ENCODE measurements at regions of chr13 and their contacts with region 1.

Region 1: DNA sequence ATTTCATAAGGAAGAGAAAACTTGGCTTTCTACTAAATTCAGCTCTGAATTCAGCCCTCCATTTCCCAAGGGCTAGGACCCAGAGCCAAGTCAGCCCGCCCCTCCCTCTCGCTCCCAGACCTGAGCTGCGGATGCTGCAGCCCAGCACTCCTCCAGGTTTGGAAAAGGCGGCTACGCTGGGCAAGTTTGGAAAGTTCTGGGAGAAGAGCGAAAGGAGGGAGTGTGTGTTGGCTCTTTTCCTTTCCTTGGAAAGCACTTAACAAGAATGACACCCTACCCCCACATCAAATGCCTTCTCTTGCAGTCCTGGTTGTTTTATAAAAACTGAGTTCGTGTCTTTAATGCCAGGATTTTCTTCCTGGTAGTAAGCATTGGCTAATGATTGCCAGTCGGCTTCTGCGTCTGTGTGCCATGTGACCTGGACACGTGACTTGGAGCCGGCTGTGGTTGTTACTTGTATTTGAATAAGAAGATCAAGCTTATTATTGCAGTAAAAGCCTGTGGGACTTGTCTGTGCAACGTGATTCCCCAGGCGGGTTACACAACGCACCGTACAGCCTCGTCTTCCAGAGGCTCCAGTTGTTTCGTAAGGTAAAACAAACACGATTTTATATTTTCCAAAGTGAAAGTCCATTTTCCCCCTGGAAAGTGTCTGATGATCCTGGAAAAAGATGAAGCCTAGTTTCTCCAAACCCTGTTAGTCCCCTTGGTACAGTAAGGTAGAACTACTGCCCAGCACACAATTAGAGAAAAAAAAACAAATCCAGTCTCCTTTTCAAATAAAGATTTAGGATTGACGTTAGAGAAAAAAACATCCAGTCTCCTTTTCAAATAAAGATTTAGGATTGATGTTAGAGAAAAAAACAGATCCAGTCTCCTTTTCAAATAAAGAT is 26.9 kb upstream of the UBE2L5 start:
- DNase-seq: peak; percentile 93
- ATAC-seq: peak; percentile 85
- H3K4me3 ChIP-seq: peak overlapping the region; percentile 54
- H3K27ac ChIP-seq: peak overlapping the region; percentile 91
- H3K4me1 ChIP-seq: no peaks in the 10 kb centered on the region
- H3K27me3 ChIP-seq: no peaks in the 10 kb centered on the region
- CTCF ChIP-seq: no peak
- POLR2A ChIP-seq: no peak
- RAD21 ChIP-seq: no peak

Region 2: GRCh38 chr13:30306762-30307193 is 88.7 kb before region 1 on chr13:
- CTCF ChIA-PET with region 1: no interaction called
- POLR2A ChIA-PET with region 1: no interaction called
- dilution Hi-C with region 1: no loop called
- in situ Hi-C with region 1: no loop called
- intact Hi-C with region 1: loop called (anchors 1 kb)
- DNase-seq: peak; percentile 91
- ATAC-seq: peak; percentile 96
- H3K4me3 ChIP-seq: peak overlapping the region; percentile 81
- H3K27ac ChIP-seq: peak overlapping the region; percentile 87
- H3K4me1 ChIP-seq: peaks cover 7% of the 10 kb centered on the region
- H3K27me3 ChIP-seq: no peaks in the 10 kb centered on the region
- CTCF ChIP-seq: no peak
- POLR2A ChIP-seq: peak; percentile 9; the same call in 1 of the 2 replicates
- RAD21 ChIP-seq: no peak

Region 3: DNA sequence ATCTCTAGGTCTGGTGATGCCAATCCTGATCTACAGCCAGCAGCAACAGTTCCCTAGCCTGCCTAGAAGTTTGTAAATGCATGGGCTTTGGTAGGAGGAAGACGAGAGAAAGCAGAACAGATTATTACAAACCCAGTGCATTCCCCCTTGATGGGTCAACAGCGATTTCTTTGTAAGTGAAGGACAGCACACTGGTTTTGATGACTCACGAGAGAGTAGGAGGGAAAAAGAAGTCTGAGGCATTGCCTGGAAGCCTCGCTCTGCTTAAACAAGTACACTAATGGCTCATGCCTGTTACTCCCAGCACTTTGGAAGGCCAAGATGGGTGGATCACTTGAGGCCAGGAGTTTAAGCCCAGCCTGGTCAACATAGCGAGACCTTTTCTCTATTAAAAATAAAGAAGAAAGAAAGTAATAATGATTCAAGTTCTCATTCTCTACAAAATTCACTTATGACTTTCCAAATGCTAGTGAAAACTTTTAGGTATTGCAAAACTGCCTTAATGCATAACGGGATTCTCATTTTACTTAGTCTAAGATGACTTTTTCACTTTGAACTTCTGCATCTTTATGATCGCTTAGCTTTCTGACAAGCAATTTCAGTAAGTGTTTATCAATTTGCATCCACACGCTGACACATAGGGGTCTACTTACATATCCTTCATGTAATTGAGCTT is 174.6 kb after region 1 on chr13:
- CTCF ChIA-PET with region 1: no interaction called
- POLR2A ChIA-PET with region 1: no interaction called
- dilution Hi-C with region 1: no loop called
- in situ Hi-C with region 1: no loop called
- intact Hi-C with region 1: no loop called
- DNase-seq: peak; percentile 99
- ATAC-seq: peak; percentile 95
- H3K4me3 ChIP-seq: no peak overlapping the region
- H3K27ac ChIP-seq: peak overlapping the region; percentile 84
- H3K4me1 ChIP-seq: peaks cover 3% of the 10 kb centered on the region; the same call in 1 of the 2 replicates
- H3K27me3 ChIP-seq: no peaks in the 10 kb centered on the region
- CTCF ChIP-seq: no peak
- POLR2A ChIP-seq: no peak
- RAD21 ChIP-seq: 0 out of 2 replicates have a peak, but pooled peaks have one; percentile 21

Measured in IMR-90 (cell line).